Pancreas (tissue), 10 donors: ENCODE measurements at regions of chr12 and their contacts with region 1.

Region 1: DNA sequence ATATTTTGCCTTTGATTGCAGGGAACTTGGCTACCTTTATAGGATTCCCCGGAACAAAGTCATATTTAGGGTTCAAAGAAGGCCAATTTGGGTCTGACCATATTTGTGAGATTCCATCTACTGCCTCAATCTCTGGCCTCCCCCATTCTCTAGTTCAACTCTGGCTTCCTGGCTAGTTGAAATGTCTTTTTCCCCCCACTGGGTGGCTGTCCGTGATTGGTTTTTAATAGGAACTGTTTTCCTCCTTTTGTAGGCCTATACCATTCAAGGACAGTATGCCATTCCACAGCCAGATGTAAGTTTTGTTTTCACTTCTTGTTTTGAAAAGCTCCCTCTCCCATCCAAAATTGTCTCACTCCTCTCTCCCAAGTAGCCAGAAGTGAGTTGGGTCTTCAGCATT is 13.8 kb downstream of the PCBP2 start:
- DNase-seq: no peak
- ATAC-seq: no peak
- H3K4me3 ChIP-seq: no peak overlapping the region
- H3K27ac ChIP-seq: no peak overlapping the region
- H3K4me1 ChIP-seq: no peaks in the 10 kb centered on the region
- H3K27me3 ChIP-seq: no peaks in the 10 kb centered on the region
- CTCF ChIP-seq: no peak

Region 2: DNA sequence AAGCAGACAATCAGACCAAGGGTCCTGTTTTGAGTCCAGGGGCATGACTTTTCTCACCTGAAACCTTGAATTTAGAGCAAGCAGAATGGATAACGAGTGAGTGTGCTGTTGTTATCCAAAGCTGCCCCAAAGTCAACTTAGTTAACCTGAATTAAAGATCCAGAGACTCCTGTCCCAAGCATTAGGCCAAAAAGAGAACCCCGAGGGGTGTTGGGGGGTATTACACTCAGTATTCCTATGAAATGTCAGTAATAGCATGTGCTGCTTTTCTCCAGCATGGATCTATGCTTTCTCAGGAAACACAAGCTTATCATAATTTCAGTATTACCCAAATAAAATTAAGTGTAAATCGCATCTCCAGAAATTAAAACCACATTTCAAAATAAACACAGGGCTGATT is 440.4 kb before region 1 on chr12:
- intact Hi-C with region 1: loop called in 1 of 3 experiments (anchors 10 kb)
- DNase-seq: no peak
- ATAC-seq: no peak
- H3K4me3 ChIP-seq: no peak overlapping the region
- H3K27ac ChIP-seq: no peak overlapping the region
- H3K4me1 ChIP-seq: peaks cover 0 to 4% (median 0%) of the 10 kb centered on the region in 3 donors
- H3K27me3 ChIP-seq: no peaks in the 10 kb centered on the region
- CTCF ChIP-seq: no peak

Region 3: GRCh38 chr12:53670299-53670698 is 204.6 kb after region 1 on chr12:
- intact Hi-C with region 1: no loop called
- DNase-seq: no peak
- ATAC-seq: peak in 2 of 4 donors; percentile 55 to 72
- H3K4me3 ChIP-seq: no peak overlapping the region
- H3K27ac ChIP-seq: no peak overlapping the region
- H3K4me1 ChIP-seq: peaks cover 0 to 15% (median 4%) of the 10 kb centered on the region in 3 donors
- H3K27me3 ChIP-seq: no peaks in the 10 kb centered on the region
- CTCF ChIP-seq: no peak